AG04449 (cell line): ENCODE measurements at regions of chr1 and their contacts with region 1.

Region 1: DNA sequence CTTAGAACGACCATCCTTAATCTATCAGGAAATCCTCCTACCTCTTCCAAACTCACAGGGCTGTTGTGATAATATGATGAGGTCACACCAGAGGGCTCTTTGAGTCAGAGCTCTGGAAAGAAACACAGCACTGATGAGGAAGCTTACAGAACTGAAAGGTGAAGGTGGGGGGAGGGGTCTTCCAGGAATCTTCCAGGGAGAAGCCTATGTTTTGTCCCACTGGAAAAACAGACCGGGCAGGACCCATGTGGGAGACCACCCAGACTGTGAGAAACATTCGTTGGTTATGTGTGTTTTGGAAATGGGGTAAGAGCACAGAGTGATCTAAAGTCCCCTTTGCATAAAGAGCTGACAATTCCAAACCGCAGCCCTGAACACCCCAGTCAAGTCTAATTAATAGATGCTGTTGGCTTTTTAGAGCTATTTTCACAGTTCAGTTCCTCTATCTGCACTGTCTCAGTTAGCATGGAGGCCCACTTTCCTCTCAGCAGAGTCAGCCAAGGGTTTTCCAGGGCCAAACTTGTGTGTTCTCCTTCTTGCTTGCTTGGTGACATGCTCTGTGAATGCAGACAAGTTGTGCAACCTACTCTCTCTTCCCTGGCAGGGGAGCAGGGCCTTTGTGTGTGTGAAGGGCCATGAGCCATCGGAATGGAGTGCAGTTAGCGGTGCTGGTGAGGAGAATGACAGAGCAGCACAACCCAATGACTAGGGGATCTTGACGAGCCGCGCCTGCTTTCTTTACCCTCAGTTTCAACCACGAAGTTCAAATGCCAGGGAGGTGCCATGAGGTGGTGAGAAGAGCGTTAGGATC is 12.3 kb downstream of the PHLDA3 start:
- DNase-seq: peak; percentile 96
- H3K4me3 ChIP-seq: no peak overlapping the region
- CTCF ChIP-seq: no peak

Region 2: DNA sequence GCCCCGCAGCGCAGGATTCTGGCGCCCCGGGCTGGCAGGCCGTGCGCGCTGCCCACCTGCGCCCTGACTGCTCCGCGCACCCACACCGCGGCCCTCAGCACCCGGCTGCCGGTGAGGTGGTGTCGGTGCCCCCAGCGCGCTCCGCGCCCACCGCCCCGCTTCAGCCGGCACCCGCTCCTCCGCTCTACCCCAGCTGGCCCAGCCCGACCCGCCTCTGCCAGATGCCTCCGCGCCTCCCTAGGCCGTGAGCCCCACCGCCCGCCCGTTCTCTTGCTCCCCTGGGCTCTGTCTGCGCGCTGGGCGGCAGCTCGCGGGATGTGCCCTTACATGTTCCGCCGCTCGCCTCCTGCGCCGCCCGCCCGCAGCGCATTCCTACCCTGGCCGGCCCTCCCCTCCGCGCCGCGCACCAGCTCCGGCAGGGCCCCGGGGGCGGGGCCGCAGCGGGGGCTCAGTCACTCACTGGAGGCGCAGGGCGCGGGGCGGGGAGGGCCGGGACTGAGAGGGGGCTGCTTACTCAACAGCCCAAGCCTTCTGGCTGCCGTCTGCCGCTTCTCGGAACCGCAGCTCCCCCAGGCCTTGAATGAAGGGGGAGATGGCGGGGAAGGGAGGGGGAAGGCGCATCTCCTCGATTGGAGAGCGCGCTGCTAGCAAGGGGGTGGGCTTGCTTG is 12.3 kb after region 1 on chr1 and contains the start of gene PHLDA3:
- CTCF ChIA-PET with region 1: interaction called, 47 read pairs
- POLR2A ChIA-PET with region 1: interaction called, 12 read pairs
- DNase-seq: no peak
- H3K4me3 ChIP-seq: peak within 1 kb of the TSS; percentile 97
- CTCF ChIP-seq: no peak

Region 3: GRCh38 chr1:201500670-201501120 is 44.0 kb after region 1 on chr1:
- CTCF ChIA-PET with region 1: interaction called, 3 read pairs
- POLR2A ChIA-PET with region 1: interaction called, 13 read pairs
- DNase-seq: no peak
- H3K4me3 ChIP-seq: no peak overlapping the region
- CTCF ChIP-seq: no peak

Region 4: DNA sequence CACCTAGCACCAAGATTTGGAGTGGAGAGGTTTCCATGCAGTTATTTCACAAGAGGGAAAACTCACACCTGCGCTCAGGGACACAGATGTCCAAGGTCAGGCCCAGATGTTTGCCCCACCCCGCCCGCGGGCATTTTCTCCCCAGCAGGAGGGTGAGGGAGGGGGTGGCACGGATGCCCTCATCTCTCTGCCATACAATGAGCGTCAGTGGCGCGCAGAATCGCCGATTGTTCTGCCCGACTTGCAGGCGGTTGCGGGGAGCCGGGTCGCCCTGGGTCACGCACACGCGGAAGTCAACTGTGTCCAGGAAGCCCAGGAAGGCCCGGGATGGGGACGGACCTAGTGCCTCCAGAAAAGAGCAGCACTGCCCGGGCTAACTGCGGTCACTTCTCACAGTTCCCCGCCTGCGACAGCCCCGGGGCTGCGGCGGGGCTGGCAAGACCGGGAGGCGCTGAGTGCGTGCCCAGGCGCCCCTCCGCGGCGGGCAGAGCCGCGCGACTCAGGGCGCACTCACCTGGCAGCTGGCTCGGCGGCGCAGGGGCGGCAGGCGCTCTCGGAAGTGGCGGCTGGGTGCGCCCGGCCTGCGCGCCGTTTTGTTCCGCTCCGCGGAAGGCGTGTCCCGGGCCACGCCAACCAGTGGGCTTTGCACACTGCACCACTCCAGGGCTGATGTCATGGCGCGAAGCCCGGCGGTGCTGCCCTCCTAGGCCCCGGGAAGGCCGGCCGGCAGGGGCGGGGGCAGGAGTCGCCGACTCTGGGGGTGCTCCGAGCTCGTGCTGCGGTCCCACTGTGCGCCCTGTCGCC is 50.1 kb after region 1 on chr1 and contains the start of gene CSRP1:
- CTCF ChIA-PET with region 1: interaction called, 305 read pairs
- POLR2A ChIA-PET with region 1: interaction called, 13 read pairs
- DNase-seq: no peak
- H3K4me3 ChIP-seq: peak within 1 kb of the TSS; percentile 83
- CTCF ChIP-seq: no peak